ENCODE measurements at regions of chr6 and their contacts with region 1.

Region 1: GRCh38 chr6:134174672-134175198 is 122.3 kb upstream of the SLC2A12 start:
- DNase-seq: peak; percentile 77 to 96
- H3K4me3 ChIP-seq: peak overlapping the region; percentile 53 to 76 (median 67)
- H3K27ac ChIP-seq: peak overlapping the region; percentile 50; the same call in 1 of the 2 replicates
- H3K4me1 ChIP-seq: peaks cover 4 to 13% (median 8%) of the 10 kb centered on the region in 4 experiments; a peak in 6 of 7 replicates
- H3K27me3 ChIP-seq: peaks cover 0 to 18% (median 12%) of the 10 kb centered on the region in 4 experiments; a peak in 6 of 7 replicates
- CTCF ChIP-seq: no peak
- EP300 ChIP-seq: no peak; a peak in 1 of 3 replicates
- POLR2A ChIP-seq: peak; percentile 98 to 99
- RAD21 ChIP-seq: no peak; a peak in 2 of 4 replicates

Region 2: GRCh38 chr6:134131530-134132139 is 43.1 kb before region 1 on chr6:
- CTCF ChIA-PET with region 1: no interaction called
- POLR2A ChIA-PET with region 1: no interaction called
- DNase-seq: no peak
- H3K4me3 ChIP-seq: no peak overlapping the region
- H3K27ac ChIP-seq: no peak overlapping the region
- H3K4me1 ChIP-seq: no peaks in the 10 kb centered on the region
- H3K27me3 ChIP-seq: no peaks in the 10 kb centered on the region
- CTCF ChIP-seq: no peak
- EP300 ChIP-seq: no peak
- POLR2A ChIP-seq: no peak
- RAD21 ChIP-seq: no peak

Region 3: GRCh38 chr6:134161036-134161435 is 13.7 kb before region 1 on chr6:
- CTCF ChIA-PET with region 1: interaction called, 12 read pairs
- POLR2A ChIA-PET with region 1: interaction called, 4 read pairs
- DNase-seq: no peak
- H3K4me3 ChIP-seq: no peak overlapping the region
- H3K27ac ChIP-seq: no peak overlapping the region; the same call in 1 of the 2 replicates
- H3K4me1 ChIP-seq: peaks cover 0 to 3% (median 3%) of the 10 kb centered on the region in 4 experiments; a peak in 4 of 7 replicates
- H3K27me3 ChIP-seq: no peaks in the 10 kb centered on the region
- CTCF ChIP-seq: no peak
- EP300 ChIP-seq: no peak
- POLR2A ChIP-seq: no peak
- RAD21 ChIP-seq: no peak

Region 4: DNA sequence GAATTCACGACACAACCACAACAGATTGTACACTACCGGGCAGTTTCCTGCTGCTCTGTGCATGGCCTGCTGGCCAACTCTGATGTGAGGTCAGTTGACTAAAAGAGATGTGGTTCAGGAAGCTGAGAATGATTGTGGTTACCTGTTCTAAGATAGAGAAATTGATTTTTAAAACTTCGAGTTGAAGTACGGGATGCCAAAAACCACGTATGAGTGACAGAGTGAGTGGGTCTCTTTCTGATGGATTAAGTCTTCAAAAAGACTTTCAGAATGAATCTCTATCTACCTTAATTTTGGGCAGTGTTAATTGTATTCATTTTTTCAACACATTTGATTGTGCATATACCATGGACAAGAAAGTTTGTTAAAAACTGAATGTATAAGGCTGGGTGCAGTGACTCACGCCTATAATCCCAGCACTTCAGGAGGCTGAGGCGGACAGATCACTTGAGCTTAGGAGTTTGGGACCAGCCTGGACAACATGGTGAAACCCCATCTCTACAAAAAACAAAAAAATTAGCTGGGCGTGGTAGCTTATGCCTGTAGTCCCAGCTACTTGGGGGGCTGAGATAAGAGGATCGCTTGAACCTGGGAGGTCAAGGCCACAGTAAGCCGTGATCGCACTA is 21.9 kb after region 1 on chr6:
- CTCF ChIA-PET with region 1: interaction called, 16 read pairs
- POLR2A ChIA-PET with region 1: interaction called, 4 read pairs
- DNase-seq: no peak
- H3K4me3 ChIP-seq: no peak overlapping the region
- H3K27ac ChIP-seq: no peak overlapping the region
- H3K4me1 ChIP-seq: peaks cover 0 to 8% (median 3%) of the 10 kb centered on the region in 4 experiments; a peak in 2 of 7 replicates
- H3K27me3 ChIP-seq: no peaks in the 10 kb centered on the region
- CTCF ChIP-seq: no peak
- EP300 ChIP-seq: no peak
- POLR2A ChIP-seq: no peak
- RAD21 ChIP-seq: no peak

Region 5: DNA sequence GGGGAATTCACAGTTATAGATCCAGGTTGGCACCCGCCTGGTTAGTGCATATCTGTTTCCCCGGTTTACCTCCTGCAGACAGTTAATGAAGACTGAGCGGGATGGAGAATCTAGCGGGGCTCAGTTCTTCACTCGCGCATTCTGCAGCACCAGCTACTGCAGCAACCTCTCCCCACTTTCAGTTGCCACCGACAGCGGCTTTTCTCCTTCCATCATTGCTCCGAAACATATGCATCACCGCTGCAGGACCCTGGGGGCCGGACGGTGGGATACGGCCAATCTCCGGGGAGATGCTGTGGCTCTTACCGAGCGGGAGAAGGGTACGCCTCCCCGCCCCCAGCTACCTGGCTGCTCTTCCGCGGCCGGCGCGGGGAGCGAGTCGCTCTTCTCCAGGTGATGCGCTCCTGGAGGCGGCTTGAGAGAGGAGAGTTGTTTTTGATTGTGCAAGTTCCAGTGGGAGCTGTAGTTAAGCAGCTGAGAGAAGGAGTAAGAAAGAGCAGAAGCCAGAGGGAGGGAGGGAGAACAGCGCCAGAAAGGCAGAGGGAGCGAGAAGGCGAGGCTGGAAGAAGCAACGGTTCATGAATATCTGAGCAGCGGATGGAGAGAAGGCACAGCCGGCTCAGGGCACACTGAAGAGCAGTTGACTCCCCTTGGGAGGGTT is 142.9 kb after region 1 on chr6 and contains the start of gene SGK1:
- CTCF ChIA-PET with region 1: interaction called, 10 read pairs
- POLR2A ChIA-PET with region 1: interaction called, 3 read pairs
- DNase-seq: peak in 1 of 2 experiments; percentile 66
- H3K4me3 ChIP-seq: peak within 1 kb of the TSS; percentile 35 to 64 (median 62)
- H3K27ac ChIP-seq: no peak within 1 kb of the TSS
- H3K4me1 ChIP-seq: peaks cover 5 to 15% (median 7%) of the 10 kb centered on the region in 4 experiments; a peak in 5 of 7 replicates
- H3K27me3 ChIP-seq: 0 out of 7 replicates have a peak, but pooled peaks cover 0 to 2% (median 0%) of the 10 kb centered on the region in 4 experiments
- CTCF ChIP-seq: peak in 2 of 3 experiments; percentile 12 to 24; a peak in 3 of 4 replicates
- EP300 ChIP-seq: peak; percentile 44 to 59; a peak in 1 of 3 replicates
- POLR2A ChIP-seq: no peak
- RAD21 ChIP-seq: peak; percentile 22 to 27; a peak in 3 of 4 replicates
- total RNA-seq, gene SGK1: 18.4 and 18.6 TPM in 2 replicates

Region 6: DNA sequence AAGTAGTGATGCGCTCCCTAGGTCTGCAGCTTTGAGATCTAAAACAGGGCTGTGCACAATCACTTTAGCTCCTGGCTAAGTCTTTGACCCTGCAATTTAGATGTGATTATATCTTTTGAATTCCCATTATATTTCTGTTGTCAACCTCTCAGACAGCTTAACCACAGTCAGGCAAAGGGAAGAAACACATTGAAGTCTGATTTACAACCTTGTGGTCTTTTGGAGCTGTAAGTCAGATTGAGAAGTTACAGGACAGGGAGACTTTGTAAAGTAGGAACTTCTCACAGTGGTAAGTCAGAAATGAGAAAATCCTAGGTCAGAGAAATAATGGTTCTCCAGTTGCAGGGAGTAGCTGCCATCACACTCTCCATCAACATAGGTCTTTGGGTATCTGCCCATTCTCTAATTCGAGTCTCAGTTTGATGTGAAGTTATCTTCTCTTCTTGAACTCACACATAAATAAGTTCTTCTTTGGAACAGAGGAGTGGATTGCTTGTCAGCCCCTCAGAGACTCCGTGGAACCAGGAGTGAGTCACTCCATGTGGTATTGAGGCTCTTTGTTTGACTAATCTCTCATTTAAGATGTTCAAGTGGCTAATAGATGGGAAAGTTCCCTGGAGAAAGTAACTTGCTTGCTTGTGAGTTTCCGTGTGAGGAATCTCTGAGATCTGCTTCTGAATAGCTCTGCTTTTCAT is 178.2 kb after region 1 on chr6:
- CTCF ChIA-PET with region 1: interaction called, 11 read pairs
- POLR2A ChIA-PET with region 1: interaction called, 3 read pairs
- DNase-seq: no peak
- H3K4me3 ChIP-seq: no peak overlapping the region
- H3K27ac ChIP-seq: no peak overlapping the region
- H3K4me1 ChIP-seq: peaks cover 0 to 3% (median 1%) of the 10 kb centered on the region in 4 experiments; a peak in 2 of 7 replicates
- H3K27me3 ChIP-seq: no peaks in the 10 kb centered on the region
- CTCF ChIP-seq: no peak
- EP300 ChIP-seq: no peak
- POLR2A ChIP-seq: no peak
- RAD21 ChIP-seq: no peak

Region 7: GRCh38 chr6:134822920-134823709 is 648.4 kb after region 1 on chr6:
- CTCF ChIA-PET with region 1: interaction called, 25 read pairs
- POLR2A ChIA-PET with region 1: interaction called, 6 read pairs
- DNase-seq: peak in 1 of 2 experiments; percentile 44
- H3K4me3 ChIP-seq: no peak overlapping the region
- H3K27ac ChIP-seq: no peak overlapping the region
- H3K4me1 ChIP-seq: no peaks in the 10 kb centered on the region
- H3K27me3 ChIP-seq: no peaks in the 10 kb centered on the region
- CTCF ChIP-seq: peak; percentile 26 to 99 (median 92)
- EP300 ChIP-seq: no peak
- POLR2A ChIP-seq: no peak
- RAD21 ChIP-seq: peak; percentile 100

Measured in H1 (cell line).